MCF 10A (cell line): ENCODE measurements at regions of chr22 and their contacts with region 1.

Region 1: DNA sequence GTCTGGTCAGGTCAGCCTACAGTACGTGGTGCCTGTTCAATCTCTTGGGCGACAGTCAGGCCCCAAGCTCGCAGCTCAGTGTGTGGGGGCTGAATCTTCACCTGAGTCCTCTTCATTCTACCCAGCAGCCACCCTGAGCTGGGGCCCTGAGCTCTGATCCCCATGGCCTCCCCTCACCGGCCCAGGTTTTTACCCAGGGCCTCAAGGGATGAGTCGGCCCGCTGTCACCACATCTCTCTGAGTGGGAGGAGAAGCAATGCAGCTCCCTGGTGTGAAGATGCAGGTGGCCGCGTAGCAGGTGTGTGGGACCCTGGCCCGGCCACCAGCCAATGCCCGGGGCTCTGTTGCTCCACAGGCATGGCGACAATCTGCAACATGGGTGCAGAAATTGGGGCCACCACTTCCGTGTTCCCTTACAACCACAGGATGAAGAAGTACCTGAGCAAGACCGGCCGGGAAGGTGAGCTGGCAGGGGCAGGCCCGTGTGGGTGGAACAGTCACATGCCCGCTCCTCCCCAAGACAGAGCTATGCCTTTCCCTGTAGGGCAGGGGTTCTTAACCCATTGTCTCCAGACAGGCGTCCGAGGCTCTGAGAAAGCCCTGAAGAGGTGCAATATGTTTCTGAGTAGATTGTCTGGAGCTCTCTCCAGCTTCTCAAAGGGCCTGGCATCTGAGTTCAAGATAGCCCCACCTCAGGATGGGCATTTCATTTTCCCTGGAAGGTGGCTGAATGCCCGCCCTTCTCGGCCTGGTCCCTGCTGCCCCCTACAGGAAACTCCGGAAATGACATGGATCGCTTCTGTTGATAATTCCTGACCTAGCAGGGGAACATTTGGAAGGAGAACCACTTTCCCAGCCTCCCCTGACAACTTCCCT is 26.9 kb downstream of the POLR3H start:
- DNase-seq: peak; percentile 77
- H3K4me3 Mint-ChIP-seq: no peak overlapping the region
- H3K27ac Mint-ChIP-seq: no peak overlapping the region
- H3K4me1 Mint-ChIP-seq: peaks cover 14% of the 10 kb centered on the region
- H3K27me3 Mint-ChIP-seq: no peaks in the 10 kb centered on the region
- CTCF ChIP-seq: peak; percentile 73

Region 2: GRCh38 chr22:41256254-41256897 is 261.0 kb before region 1 on chr22:
- CTCF ChIA-PET with region 1: no interaction called
- POLR2A ChIA-PET with region 1: no interaction called
- intact Hi-C with region 1: loop called (anchors 1 kb)
- DNase-seq: peak; percentile 89
- H3K4me3 Mint-ChIP-seq: no peak overlapping the region
- H3K27ac Mint-ChIP-seq: peak overlapping the region; percentile 75
- H3K4me1 Mint-ChIP-seq: peaks cover 9% of the 10 kb centered on the region
- H3K27me3 Mint-ChIP-seq: no peaks in the 10 kb centered on the region
- CTCF ChIP-seq: peak; percentile 35

Region 3: DNA sequence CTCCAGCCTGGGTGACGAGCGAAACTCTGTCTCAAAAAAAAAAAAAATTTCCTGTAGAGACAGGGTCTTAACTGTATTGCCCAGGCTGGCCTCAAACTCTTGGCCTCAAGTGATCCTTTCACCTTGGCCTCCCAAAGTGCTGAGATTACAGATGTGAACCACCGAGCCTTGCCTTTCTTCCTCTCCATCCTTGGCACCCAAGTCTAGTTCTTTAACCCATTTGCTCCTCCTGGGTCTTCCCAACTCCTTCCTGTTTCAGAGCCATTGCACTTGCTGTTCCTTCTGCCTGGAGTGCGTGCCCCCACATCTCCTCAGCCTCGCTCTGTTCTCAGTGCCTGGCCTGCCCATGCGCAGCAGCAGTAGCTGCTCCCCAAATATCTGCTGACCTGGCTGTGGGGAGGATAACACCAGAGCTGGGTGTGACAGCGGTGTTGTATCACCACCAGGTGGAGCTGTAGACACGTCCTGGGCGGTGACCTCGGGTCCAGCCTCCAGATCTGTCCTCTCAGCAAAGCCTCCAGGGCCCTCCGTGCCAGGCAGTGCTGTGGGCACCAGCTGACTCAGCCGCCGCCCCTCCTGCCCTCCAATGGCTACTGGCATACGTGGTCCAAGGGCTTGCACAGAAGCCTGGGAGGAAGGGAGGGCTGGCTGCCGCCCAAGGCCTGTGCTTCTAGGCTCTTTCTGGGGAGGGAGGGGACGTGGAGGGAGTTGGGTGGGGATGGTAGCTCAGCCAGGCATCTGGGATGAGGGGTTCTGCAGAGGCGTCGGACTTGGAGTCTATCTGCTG is 113.7 kb before region 1 on chr22:
- CTCF ChIA-PET with region 1: interaction called, 95 read pairs
- POLR2A ChIA-PET with region 1: interaction called, 12 read pairs
- intact Hi-C with region 1: loop called (anchors 1 kb)
- DNase-seq: peak; percentile 93
- H3K4me3 Mint-ChIP-seq: no peak overlapping the region
- H3K27ac Mint-ChIP-seq: peak overlapping the region; percentile 8
- H3K4me1 Mint-ChIP-seq: peaks cover 13% of the 10 kb centered on the region
- H3K27me3 Mint-ChIP-seq: no peaks in the 10 kb centered on the region
- CTCF ChIP-seq: peak; percentile 86

Region 4: DNA sequence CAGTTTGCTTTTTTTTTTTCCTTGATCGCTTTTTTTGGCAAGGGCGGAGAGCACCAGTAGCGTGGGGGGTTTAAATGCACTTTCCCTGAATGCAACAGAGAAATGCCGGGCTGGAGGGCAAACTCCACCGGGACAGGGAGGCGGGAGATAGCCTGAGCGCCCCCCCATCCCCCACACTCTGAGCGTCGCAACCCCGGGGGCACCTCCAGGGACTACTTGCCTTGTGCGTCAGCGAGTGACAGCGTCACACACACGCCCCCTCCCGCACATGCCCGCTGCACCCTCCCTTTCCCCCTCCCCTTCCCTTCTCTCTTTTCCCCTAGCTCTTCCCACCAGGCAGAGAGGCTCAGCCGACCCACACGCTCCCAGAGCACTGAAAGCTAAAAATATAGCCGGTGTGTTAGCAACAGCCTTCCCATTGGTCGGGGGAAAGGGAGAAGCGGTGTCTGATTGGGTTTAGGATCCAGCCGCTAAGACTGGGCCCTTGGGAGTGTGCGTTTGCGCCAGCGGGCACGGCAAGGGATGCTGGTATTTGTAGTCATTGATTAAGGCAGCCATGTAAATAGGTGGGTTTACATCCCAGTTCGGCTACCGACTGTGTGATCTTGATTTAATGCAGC is 69.1 kb before region 1 on chr22:
- CTCF ChIA-PET with region 1: interaction called, 9 read pairs
- POLR2A ChIA-PET with region 1: interaction called, 18 read pairs
- intact Hi-C with region 1: loop called (anchors 1 kb)
- DNase-seq: peak; percentile 100
- H3K4me3 Mint-ChIP-seq: peak overlapping the region; percentile 96
- H3K27ac Mint-ChIP-seq: peak overlapping the region; percentile 97
- H3K4me1 Mint-ChIP-seq: peaks cover 11% of the 10 kb centered on the region
- H3K27me3 Mint-ChIP-seq: no peaks in the 10 kb centered on the region
- CTCF ChIP-seq: no peak

Region 5: GRCh38 chr22:41479671-41480396 is 37.6 kb before region 1 on chr22:
- CTCF ChIA-PET with region 1: interaction called, 10 read pairs
- POLR2A ChIA-PET with region 1: no interaction called
- intact Hi-C with region 1: no loop called
- DNase-seq: peak; percentile 12
- H3K4me3 Mint-ChIP-seq: no peak overlapping the region
- H3K27ac Mint-ChIP-seq: peak overlapping the region; percentile 37
- H3K4me1 Mint-ChIP-seq: peaks cover 25% of the 10 kb centered on the region
- H3K27me3 Mint-ChIP-seq: no peaks in the 10 kb centered on the region
- CTCF ChIP-seq: no peak

Region 6: GRCh38 chr22:41576877-41577276 is 59.5 kb after region 1 on chr22:
- CTCF ChIA-PET with region 1: no interaction called
- POLR2A ChIA-PET with region 1: no interaction called
- intact Hi-C with region 1: no loop called
- DNase-seq: peak; percentile 56
- H3K4me3 Mint-ChIP-seq: no peak overlapping the region
- H3K27ac Mint-ChIP-seq: no peak overlapping the region
- H3K4me1 Mint-ChIP-seq: no peaks in the 10 kb centered on the region
- H3K27me3 Mint-ChIP-seq: no peaks in the 10 kb centered on the region
- CTCF ChIP-seq: peak; percentile 51